Gastrocnemius medialis (tissue), 4 donors: ENCODE measurements at regions of chr20 and their contacts with region 1.

Region 1: DNA sequence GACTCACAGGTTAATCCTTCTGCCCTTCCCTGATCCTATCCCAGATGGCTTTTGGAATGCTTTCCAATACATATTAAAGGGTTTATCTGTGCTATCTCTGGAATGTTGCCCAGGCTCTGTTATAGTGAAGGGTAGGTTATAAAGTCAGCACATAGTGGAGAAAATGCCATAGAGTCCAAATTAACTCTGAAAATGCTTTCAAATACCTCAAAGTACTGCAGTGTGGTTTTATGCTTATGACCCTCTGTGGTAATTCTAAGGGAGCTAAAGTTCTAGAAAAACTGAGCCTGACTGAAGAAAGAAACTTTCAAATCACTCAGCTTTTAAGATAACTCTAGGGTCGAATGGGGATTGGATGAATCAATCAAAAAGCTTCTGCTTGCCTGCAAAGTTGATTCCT is 159.8 kb downstream of the PLCB1 start:
- DNase-seq: no peak
- ATAC-seq: no peak
- H3K4me3 ChIP-seq: no peak overlapping the region
- H3K27ac ChIP-seq: no peak overlapping the region
- H3K4me1 ChIP-seq: peaks cover 9 to 13% of the 10 kb centered on the region in 2 donors
- H3K27me3 ChIP-seq: no peaks in the 10 kb centered on the region
- CTCF ChIP-seq: no peak
- POLR2A ChIP-seq: no peak

Region 2: DNA sequence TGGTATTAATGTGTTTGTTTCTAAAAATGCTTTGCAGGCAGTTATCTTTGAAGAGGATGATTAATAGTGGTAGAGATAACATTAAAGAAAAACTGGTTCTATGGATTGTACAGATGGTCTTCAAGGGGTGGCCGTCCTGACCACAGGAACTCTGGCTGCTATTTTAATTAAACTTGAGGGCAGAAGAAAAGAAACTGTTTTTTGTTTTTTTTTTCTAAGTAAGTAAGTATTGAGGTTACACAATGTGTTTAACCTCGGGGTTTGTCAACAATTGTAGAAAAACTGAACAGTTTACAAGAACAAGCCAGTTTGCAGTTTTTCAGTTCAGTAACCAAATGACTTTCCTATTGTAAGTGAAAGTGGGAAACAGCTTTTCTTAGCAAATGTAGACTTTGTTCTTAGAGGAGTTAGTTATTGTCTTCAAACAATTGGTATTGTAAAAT is 82.9 kb before region 1 on chr20:
- in situ Hi-C with region 1: no loop called
- intact Hi-C with region 1: loop called (anchors 10 kb)
- DNase-seq: no peak
- ATAC-seq: no peak
- H3K4me3 ChIP-seq: no peak overlapping the region
- H3K27ac ChIP-seq: no peak overlapping the region
- H3K4me1 ChIP-seq: peaks cover 5 to 16% of the 10 kb centered on the region in 2 donors
- H3K27me3 ChIP-seq: no peaks in the 10 kb centered on the region
- CTCF ChIP-seq: no peak
- POLR2A ChIP-seq: no peak